ENCODE measurements at regions of chr11 and their contacts with region 1.

Region 1: GRCh38 chr11:113896156-113896879 is 8.3 kb upstream of the HTR3B start:
- DNase-seq: peak; percentile 56
- ATAC-seq: peak; percentile 81
- H3K4me3 ChIP-seq: no peak overlapping the region
- H3K27ac ChIP-seq: no peak overlapping the region
- H3K4me1 ChIP-seq: no peaks in the 10 kb centered on the region
- H3K27me3 ChIP-seq: peaks cover 19% of the 10 kb centered on the region
- CTCF ChIP-seq: peak; percentile 95

Region 2: GRCh38 chr11:113994077-113994954 is 98.0 kb after region 1 on chr11:
- CTCF ChIA-PET with region 1: no interaction called
- POLR2A ChIA-PET with region 1: no interaction called
- intact Hi-C with region 1: loop called (anchors 2 kb)
- DNase-seq: peak; percentile 43
- ATAC-seq: peak; percentile 43; the same call in 1 of the 2 replicates
- H3K4me3 ChIP-seq: no peak overlapping the region
- H3K27ac ChIP-seq: no peak overlapping the region
- H3K4me1 ChIP-seq: no peaks in the 10 kb centered on the region
- H3K27me3 ChIP-seq: peaks cover 18% of the 10 kb centered on the region; the same call in 1 of the 2 replicates
- CTCF ChIP-seq: peak; percentile 89

Region 3: DNA sequence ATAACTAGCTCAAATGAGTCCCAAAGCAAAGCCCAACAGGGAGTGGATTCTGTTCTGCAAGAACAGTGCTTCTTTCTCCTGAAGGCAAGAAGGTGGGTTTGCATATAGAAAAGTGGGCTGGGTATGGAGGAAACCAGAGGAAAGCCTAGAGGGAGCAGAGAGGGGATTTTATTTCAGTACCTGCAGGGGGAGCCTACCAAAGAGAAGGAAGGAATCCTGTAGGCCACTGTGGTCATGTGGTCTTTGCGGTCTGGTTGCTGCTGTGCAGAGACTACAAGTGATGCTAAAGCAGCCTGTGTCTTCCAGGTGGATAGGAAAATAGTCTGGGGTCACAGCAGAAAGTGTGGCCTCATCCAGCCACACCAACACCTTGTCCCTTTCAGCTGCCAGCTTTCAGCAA is 130.0 kb after region 1 on chr11:
- CTCF ChIA-PET with region 1: no interaction called
- POLR2A ChIA-PET with region 1: no interaction called
- intact Hi-C with region 1: no loop called
- DNase-seq: peak; percentile 21
- ATAC-seq: no peak
- H3K4me3 ChIP-seq: no peak overlapping the region
- H3K27ac ChIP-seq: no peak overlapping the region
- H3K4me1 ChIP-seq: 0 out of 2 replicates have a peak, but pooled peaks cover under 1% of the 10 kb centered on the region
- H3K27me3 ChIP-seq: peaks cover 25% of the 10 kb centered on the region
- CTCF ChIP-seq: peak; percentile 32

Region 4: GRCh38 chr11:114068327-114068726 is 172.0 kb after region 1 on chr11:
- CTCF ChIA-PET with region 1: interaction called, 15 read pairs
- POLR2A ChIA-PET with region 1: no interaction called
- intact Hi-C with region 1: no loop called
- DNase-seq: no peak
- ATAC-seq: no peak
- H3K4me3 ChIP-seq: no peak overlapping the region
- H3K27ac ChIP-seq: no peak overlapping the region
- H3K4me1 ChIP-seq: no peaks in the 10 kb centered on the region
- H3K27me3 ChIP-seq: peaks cover 90% of the 10 kb centered on the region
- CTCF ChIP-seq: no peak